OCI-LY7 (cell line): ENCODE measurements at regions of chr1 and their contacts with region 1.

Region 1: DNA sequence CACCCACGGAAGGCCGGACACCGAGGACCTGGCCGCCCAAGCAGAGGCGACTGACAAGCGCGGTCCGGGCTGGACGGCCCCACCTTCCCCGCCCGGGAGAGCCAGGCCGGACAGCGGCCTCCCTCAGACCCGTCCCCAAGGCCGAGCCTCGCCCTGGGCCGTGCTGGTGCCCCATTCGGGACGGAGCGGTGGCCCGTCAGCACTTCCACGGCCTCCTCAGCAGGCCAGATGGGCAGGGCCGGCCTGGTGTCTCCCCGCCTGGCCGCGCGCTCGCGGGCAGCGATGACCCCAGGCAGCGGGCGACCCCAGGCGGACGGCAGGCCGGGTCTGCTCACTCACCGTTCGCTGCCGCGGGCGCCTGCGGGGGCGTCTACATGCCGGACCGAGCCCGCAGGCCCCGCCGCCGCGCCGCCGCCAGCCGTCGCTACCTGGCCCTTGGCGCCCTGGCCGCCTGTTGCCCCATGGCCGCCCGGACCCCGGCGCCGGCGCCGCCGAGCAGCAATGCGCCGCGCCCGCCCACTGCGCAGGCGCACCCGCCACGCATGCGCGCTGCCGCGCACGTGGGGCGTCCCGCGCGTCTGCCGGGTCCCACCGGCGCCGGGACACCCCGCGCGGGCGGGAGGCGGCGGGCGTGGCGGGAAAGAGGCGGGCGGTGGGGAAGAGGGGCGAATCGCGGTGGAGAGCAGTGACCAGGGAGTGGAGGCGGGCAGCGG is at the start of gene NADK:
- DNase-seq: peak; percentile 84
- H3K4me3 ChIP-seq: peak within 1 kb of the TSS; percentile 97
- H3K27ac ChIP-seq: peak within 1 kb of the TSS; percentile 96
- H3K4me1 ChIP-seq: peaks cover 71% of the 10 kb centered on the region
- CTCF ChIP-seq: no peak
- total RNA-seq, gene NADK: 144 and 156 TPM in 2 replicates

Region 2: GRCh38 chr1:1833916-1834325 is 55.8 kb after region 1 on chr1:
- CTCF ChIA-PET with region 1: no interaction called
- POLR2A ChIA-PET with region 1: interaction called, 6 read pairs
- intact Hi-C with region 1: loop called (anchors 2 kb)
- DNase-seq: peak; percentile 98
- H3K4me3 ChIP-seq: peak overlapping the region; percentile 60
- H3K27ac ChIP-seq: peak overlapping the region; percentile 97
- H3K4me1 ChIP-seq: peaks cover 75% of the 10 kb centered on the region
- CTCF ChIP-seq: no peak

Region 3: GRCh38 chr1:1841575-1841995 is 63.5 kb after region 1 on chr1:
- CTCF ChIA-PET with region 1: no interaction called
- POLR2A ChIA-PET with region 1: interaction called, 6 read pairs
- intact Hi-C with region 1: loop called (anchors 1 kb)
- DNase-seq: peak; percentile 46
- H3K4me3 ChIP-seq: peak overlapping the region; percentile 56
- H3K27ac ChIP-seq: peak overlapping the region; percentile 97
- H3K4me1 ChIP-seq: peaks cover 87% of the 10 kb centered on the region
- CTCF ChIP-seq: peak; percentile 66

Region 4: DNA sequence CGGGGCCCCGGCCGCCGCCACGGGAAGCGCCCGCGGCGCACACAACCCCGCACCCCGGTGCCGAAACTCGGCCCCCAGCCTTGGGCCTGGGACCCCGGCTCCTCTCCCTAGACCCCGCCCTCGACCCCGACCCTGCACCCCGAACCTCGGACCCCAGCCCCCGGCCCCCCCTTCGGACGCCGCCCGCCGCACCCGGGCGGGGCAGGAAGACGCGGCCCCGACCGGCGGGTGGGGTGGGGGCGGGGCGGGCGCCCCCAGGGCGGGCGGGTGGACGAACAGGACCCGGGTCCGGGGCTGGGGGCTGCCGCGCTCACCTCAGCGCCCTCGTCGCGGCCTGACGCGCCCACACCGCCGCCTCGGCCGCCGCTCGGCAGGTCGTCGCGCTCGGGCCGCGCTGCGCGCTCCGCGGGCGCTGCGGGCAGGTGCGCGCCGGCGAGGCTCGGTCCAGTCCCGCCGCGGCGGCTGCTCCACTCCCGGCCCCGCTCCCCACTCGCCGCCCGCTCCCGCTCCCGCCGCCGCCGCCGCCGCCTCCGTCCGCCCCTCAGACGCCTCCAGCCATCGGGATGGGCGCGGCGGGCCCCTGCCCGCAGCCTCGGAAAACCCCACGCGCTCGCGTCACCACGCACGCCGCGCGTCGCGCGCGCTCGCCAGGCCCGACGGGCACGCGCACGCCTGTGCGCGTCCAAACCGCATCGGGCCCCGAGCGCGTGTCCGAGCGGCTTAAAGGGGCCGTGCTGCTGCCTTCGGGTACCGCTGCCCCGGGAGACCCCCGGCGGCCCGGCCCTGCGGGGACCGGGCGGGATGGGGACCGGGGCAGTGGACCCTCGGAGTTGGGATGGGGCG is 112.6 kb after region 1 on chr1 and contains the start of gene GNB1:
- CTCF ChIA-PET with region 1: no interaction called
- POLR2A ChIA-PET with region 1: interaction called, 6 read pairs
- intact Hi-C with region 1: loop called (anchors 2 kb)
- DNase-seq: peak; percentile 96
- H3K4me3 ChIP-seq: peak within 1 kb of the TSS; percentile 97
- H3K27ac ChIP-seq: peak within 1 kb of the TSS; percentile 82
- H3K4me1 ChIP-seq: peaks cover 60% of the 10 kb centered on the region
- CTCF ChIP-seq: no peak
- total RNA-seq, gene GNB1: 86.9 and 101 TPM in 2 replicates

Region 5: DNA sequence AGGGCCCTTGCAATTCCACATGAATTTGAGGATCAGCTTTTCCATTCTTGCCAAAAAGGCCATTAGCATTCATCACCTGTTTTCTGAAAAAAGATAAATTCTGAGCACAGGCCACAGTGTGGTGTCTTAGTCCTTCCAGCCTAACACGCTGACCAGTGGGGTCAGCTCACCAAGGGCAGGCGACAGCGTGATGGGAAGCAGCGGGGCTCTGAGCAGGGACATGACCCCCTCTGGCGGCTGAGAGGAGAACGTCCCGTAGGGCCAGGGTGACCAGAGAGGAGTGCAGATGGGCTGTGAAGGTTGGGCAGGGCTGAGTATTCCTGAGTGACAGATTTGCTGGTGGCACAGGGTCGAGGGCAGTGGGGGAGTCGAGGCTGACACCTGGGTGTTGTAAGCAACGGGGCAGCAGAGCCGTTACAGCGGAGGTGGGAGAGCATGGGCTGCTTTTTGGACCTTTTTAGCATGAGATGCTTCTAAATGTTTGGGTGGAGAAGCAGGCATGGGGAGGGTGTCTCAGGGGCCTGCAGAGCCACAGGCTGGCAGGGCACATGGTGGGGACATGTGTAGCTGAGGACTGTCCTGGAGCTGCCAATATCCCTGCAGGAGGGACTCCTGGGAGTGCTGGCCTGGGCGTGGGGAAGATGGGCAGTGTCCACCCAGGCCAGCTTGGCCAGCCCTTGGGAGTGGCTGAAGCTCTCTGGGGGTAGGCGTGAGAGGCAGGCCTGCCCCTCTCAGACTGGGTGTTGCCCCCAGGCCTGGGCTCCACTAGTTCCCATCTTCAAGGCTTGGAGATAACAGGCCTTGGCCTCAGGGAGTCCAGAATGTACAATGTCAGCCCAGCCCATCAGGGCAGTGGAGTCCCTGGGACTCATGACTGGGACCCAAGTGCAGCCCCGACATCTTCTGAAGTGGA is 128.3 kb after region 1 on chr1:
- CTCF ChIA-PET with region 1: interaction called, 5 read pairs
- POLR2A ChIA-PET with region 1: interaction called, 8 read pairs
- intact Hi-C with region 1: loop called (anchors 1 kb)
- DNase-seq: peak; percentile 80
- H3K4me3 ChIP-seq: no peak overlapping the region
- H3K27ac ChIP-seq: peak overlapping the region; percentile 78
- H3K4me1 ChIP-seq: peaks cover 48% of the 10 kb centered on the region
- CTCF ChIP-seq: peak; percentile 97

Region 6: DNA sequence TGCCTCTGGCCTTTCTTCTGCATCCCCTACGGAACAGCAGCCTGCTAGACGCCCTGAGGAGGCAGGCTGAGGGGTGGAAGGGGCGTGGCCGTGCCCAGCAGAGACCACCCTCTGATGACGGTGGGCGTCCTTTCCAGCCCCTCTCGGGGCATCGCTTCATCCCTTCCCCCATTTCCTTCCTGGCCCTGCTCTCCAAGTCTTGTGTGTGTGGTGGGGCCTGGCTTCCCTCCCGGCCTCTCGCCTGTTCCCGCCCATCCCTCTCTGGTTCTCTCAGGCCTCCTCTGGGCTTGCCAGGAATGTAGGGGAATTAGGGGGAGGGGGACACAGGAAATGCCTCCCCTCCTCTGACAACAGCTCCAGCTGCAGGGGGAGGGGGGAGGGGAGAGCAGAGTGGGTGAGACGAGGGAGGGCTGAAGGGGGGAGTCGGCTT is 501.1 kb after region 1 on chr1:
- CTCF ChIA-PET with region 1: no interaction called
- POLR2A ChIA-PET with region 1: no interaction called
- intact Hi-C with region 1: no loop called
- DNase-seq: no peak
- H3K4me3 ChIP-seq: no peak overlapping the region
- H3K27ac ChIP-seq: no peak overlapping the region
- H3K4me1 ChIP-seq: no peaks in the 10 kb centered on the region
- CTCF ChIP-seq: no peak